ENCODE measurements at regions of chr18 and their contacts with region 1.

Region 1: GRCh38 chr18:22563098-22563707 is 145.5 kb upstream of the CTAGE1 start:
- DNase-seq: peak; percentile 87
- H3K4me3 Mint-ChIP-seq: no peak overlapping the region
- H3K27ac Mint-ChIP-seq: peak overlapping the region; percentile 12
- H3K4me1 Mint-ChIP-seq: peaks cover 18% of the 10 kb centered on the region
- H3K27me3 Mint-ChIP-seq: no peaks in the 10 kb centered on the region
- CTCF ChIP-seq: peak; percentile 72

Region 2: DNA sequence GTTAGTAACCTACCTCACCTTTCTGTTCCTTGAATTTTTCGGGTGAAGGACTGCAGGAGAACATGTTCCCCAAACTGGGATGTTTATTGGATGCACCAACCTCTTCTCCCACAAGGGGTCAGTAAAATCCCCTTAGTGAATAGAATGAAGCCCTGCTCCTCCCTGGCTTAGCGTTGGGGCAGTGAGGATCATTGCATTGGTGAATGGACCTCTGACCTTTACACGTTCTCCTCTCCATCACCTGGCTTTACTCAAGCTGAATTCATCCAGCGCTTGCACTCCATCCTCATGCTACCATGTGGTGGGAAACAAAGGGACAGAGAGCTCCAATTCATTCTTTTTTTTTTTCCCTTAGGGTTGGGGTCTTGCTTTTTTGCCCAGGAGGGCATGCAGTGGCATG is 665.4 kb before region 1 on chr18:
- CTCF ChIA-PET with region 1: interaction called, 8 read pairs
- POLR2A ChIA-PET with region 1: no interaction called
- intact Hi-C with region 1: loop called (anchors 1 kb)
- DNase-seq: peak; percentile 73
- H3K4me3 Mint-ChIP-seq: no peak overlapping the region
- H3K27ac Mint-ChIP-seq: no peak overlapping the region
- H3K4me1 Mint-ChIP-seq: no peaks in the 10 kb centered on the region
- H3K27me3 Mint-ChIP-seq: no peaks in the 10 kb centered on the region
- CTCF ChIP-seq: peak; percentile 78

Region 3: GRCh38 chr18:21997207-21998143 is 565.7 kb before region 1 on chr18:
- CTCF ChIA-PET with region 1: interaction called, 8 read pairs
- POLR2A ChIA-PET with region 1: no interaction called
- intact Hi-C with region 1: loop called (anchors 1 kb)
- DNase-seq: peak; percentile 65
- H3K4me3 Mint-ChIP-seq: no peak overlapping the region
- H3K27ac Mint-ChIP-seq: peak overlapping the region; percentile 6
- H3K4me1 Mint-ChIP-seq: peaks cover 5% of the 10 kb centered on the region
- H3K27me3 Mint-ChIP-seq: no peaks in the 10 kb centered on the region
- CTCF ChIP-seq: peak; percentile 81

Region 4: DNA sequence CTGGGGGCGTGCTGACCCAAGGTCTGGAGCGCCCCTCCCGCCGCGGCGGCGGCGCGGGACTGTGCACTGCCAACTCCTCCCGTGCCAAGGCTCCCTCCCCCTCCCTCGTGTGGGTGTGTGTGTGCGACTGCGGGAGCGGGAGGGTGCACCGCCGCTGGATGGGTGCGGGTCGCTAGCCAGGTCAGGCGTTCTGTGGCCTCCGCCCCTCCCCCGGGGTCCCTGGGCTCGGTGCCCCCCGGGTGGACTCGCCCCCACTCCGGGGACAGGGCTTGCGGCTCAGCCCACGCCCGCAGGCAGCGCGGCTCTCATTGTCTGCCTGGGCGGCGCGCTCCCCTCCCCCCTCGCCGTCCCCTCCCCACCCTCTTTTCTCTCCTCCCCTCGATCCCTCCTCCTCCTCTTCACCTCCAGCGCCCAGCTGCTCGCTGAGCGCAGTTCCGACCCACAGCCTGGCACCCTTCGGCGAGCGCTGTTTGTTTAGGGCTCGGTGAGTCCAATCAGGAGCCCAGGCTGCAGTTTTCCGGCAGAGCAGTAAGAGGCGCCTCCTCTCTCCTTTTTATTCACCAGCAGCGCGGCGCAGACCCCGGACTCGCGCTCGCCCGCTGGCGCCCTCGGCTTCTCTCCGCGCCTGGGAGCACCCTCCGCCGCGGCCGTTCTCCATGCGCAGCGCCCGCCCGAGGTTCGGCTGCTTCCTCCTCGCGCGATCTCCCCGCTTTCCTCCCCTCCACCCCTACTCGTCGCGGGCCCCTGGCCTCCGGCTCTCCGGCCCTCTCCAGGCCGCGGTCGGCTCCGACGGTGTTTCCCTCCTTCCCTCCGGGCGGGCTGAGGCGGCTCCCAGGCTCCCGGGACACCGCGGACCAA is 394.0 kb before region 1 on chr18 and contains the start of gene GATA6:
- CTCF ChIA-PET with region 1: interaction called, 7 read pairs
- POLR2A ChIA-PET with region 1: interaction called, 5 read pairs
- intact Hi-C with region 1: loop called (anchors 1 kb)
- DNase-seq: peak; percentile 89
- H3K4me3 Mint-ChIP-seq: peak within 1 kb of the TSS; percentile 97
- H3K27ac Mint-ChIP-seq: peak within 1 kb of the TSS; percentile 78
- H3K4me1 Mint-ChIP-seq: peaks cover 6% of the 10 kb centered on the region
- H3K27me3 Mint-ChIP-seq: no peaks in the 10 kb centered on the region
- CTCF ChIP-seq: peak; percentile 25
- total RNA-seq, gene GATA6: 6.7 and 14.0 TPM in 2 replicates

Region 5: DNA sequence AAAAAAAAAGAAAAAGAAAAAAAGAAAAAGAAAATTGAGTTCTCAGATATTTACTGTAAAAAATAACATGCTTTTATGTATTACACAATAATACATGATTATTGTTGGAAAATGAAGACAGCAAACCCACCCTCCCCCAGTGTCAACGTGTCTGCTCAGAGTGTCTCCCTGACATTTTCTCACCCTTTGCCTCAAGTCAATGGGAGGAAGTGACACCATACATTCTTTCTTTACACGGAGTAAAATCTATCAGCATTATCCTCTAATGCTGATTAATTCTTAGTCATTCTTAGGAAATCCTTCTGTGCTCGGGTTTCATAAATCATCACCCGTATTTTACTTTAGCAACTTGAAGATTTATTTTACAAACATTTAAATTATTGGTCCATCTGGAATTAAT is 177.5 kb before region 1 on chr18:
- CTCF ChIA-PET with region 1: interaction called, 3 read pairs
- POLR2A ChIA-PET with region 1: no interaction called
- intact Hi-C with region 1: loop called (anchors 5 kb)
- DNase-seq: peak; percentile 84
- H3K4me3 Mint-ChIP-seq: no peak overlapping the region
- H3K27ac Mint-ChIP-seq: peak overlapping the region; percentile 71
- H3K4me1 Mint-ChIP-seq: peaks cover 7% of the 10 kb centered on the region
- H3K27me3 Mint-ChIP-seq: no peaks in the 10 kb centered on the region
- CTCF ChIP-seq: no peak

Region 6: DNA sequence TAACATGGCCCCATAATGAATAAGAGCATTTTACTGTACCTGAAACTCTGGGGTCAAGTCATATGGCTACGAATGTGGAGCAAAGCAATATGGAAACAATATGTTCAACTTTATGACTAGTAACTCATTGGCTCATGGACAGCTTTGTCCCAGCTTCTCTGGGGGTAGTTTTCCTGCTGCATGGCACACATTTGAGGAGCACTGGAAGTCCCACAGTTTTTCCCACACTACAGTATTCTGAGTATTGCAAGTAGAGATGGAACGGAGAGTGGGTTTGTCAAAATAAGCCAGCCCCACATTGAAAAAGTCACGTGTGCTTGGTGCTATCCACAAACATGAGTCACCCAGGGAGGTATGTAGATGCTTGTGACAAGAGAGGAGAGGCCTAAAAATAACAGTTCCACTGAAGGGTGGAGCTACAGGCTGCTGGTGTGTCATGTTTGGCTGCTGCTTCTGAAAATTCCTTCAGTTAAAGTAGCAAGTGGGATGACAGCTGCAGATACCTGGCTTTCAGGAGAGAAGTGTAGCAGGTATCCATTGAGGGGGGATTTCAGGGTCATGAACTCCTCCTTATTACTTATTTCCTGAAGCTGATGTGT is 97.2 kb before region 1 on chr18:
- CTCF ChIA-PET with region 1: interaction called, 3 read pairs
- POLR2A ChIA-PET with region 1: interaction called, 4 read pairs
- intact Hi-C with region 1: loop called (anchors 1 kb)
- DNase-seq: peak; percentile 96
- H3K4me3 Mint-ChIP-seq: peak overlapping the region; percentile 60
- H3K27ac Mint-ChIP-seq: peak overlapping the region; percentile 98
- H3K4me1 Mint-ChIP-seq: peaks cover 27% of the 10 kb centered on the region
- H3K27me3 Mint-ChIP-seq: no peaks in the 10 kb centered on the region
- CTCF ChIP-seq: no peak

Region 7: DNA sequence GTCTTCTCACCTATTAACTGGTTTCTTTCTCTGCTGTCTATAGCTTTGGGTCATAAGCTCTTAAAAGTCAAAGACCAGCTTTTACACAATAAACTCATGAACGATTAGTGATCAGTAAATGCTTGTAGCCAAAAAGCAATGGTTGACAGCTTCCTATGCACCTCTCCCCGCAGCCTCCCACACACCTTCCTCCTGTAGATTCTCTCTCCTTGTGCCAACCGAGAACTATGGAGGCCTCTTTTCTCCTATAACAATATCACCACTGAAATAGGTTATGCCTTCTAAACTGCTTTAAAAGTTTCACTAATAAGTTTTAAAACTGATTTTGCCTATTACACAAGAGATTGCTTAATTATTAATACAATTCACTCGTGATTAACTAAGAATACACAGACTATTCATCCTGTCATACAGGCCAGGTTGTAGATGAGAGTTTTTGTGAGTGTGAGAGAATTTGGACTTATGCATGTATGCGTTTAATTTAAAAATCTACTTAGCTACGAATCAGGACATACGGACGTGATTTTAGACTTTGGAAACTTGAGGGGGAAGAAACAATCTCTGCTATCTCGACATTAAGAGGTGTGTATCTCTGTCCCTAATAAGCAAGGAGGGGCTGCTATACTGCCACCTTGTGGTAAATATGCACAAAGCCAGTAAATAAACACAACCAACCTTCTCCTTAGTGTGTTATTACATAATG is 140.8 kb after region 1 on chr18:
- CTCF ChIA-PET with region 1: no interaction called
- POLR2A ChIA-PET with region 1: no interaction called
- intact Hi-C with region 1: loop called (anchors 1 kb)
- DNase-seq: peak; percentile 76
- H3K4me3 Mint-ChIP-seq: no peak overlapping the region
- H3K27ac Mint-ChIP-seq: no peak overlapping the region
- H3K4me1 Mint-ChIP-seq: no peaks in the 10 kb centered on the region
- H3K27me3 Mint-ChIP-seq: no peaks in the 10 kb centered on the region
- CTCF ChIP-seq: peak; percentile 74

Measured in MCF 10A (cell line).